Transverse colon (tissue), 4 donors: ENCODE measurements at regions of chr11 and their contacts with region 1.

Region 1: DNA sequence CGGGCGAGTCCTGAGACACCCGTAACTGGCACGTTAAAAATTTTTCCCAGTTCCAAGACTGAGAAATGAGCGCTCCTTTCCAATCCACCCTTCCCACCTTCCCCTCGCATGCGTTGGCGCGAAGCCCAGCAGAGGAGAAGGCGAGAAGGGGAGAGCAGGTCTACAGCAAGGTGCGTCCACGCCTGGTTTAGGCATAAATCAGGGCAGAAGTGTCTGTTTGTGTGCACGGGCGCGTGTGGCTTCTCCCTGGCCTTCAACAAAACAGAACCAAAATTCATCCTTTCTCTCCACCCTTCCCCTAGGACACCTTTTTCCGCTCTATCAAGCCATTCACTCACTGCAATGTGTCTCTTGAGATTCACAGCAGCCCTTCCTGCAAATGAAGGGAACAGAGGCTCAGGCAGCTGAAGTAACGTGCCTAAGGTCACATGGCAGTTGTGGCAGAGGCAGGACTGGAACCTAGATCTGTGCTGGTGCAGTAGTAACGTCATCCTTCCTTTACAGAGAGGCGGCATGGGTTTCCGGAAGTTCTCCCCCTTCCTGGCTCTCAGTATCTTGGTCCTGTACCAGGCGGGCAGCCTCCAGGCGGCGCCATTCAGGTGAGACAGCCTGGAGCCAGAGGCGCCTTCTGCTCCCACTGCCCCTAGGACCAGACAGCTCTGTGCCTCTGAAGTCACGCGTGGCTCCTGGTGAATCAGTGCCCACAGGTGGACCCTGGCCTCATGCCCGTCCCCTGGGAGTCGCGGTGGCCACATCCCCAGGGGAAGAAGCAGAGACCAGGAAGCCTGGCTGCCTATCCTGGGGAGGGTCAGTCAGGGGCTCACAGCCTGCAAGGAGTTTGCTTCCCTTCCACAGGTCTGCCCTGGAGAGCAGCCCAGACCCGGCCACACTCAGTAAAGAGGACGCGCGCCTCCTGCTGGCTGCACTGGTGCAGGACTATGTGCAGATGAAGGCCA is 1.1 kb downstream of the CALCB start:
- DNase-seq: peak; percentile 86
- H3K4me3 ChIP-seq: peak overlapping the region in 3 of 4 donors; percentile 8 to 34 (median 19)
- H3K27ac ChIP-seq: no peak overlapping the region
- H3K4me1 ChIP-seq: peaks cover 18 to 21% (median 19%) of the 10 kb centered on the region in 4 donors
- H3K27me3 ChIP-seq: peaks cover 44% of the 10 kb centered on the region
- CTCF ChIP-seq: peak; percentile 60 to 78 (median 77)
- EP300 ChIP-seq: no peak
- POLR2A ChIP-seq: no peak

Region 2: DNA sequence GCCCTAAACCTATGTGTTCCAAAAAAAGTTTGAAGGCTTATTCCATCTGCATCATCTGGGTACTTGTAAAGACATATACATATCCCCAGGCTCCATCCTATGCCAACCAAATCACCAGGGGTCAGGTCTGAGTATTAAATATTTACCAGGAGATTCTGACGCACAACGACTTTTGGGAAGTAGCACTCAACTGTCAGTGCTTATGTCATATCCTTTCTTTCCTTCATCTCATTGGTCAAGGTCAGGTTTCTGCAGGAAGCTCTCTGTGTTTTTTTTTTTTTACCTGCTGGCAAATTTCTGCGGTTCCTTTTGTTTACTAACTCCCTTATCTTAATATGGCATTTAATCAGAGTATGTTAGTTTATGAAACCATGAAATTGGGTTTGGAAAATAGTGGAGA is 159.9 kb before region 1 on chr11:
- in situ Hi-C with region 1: loop called in 3 of 4 experiments (anchors 10 to 25 kb)
- intact Hi-C with region 1: loop called (anchors 5 kb)
- DNase-seq: no peak
- H3K4me3 ChIP-seq: no peak overlapping the region
- H3K27ac ChIP-seq: no peak overlapping the region
- H3K4me1 ChIP-seq: no peaks in the 10 kb centered on the region
- H3K27me3 ChIP-seq: no peaks in the 10 kb centered on the region
- CTCF ChIP-seq: no peak
- EP300 ChIP-seq: no peak
- POLR2A ChIP-seq: no peak